ENCODE measurements at regions of chr3 and their contacts with region 1.

Region 1: GRCh38 chr3:39414421-39414907 is 7.9 kb downstream of the RPSA start:
- DNase-seq: no peak
- ATAC-seq: peak in 6 of 8 donors; percentile 36 to 83 (median 55)
- H3K4me3 ChIP-seq: no peak overlapping the region
- H3K27ac ChIP-seq: peak overlapping the region in 2 of 10 donors; percentile 22 to 33
- H3K4me1 ChIP-seq: peaks cover 0 to 28% (median 12%) of the 10 kb centered on the region in 9 donors
- H3K27me3 ChIP-seq: no peaks in the 10 kb centered on the region
- CTCF ChIP-seq: no peak

Region 2: GRCh38 chr3:39291903-39292329 is 122.5 kb before region 1 on chr3:
- intact Hi-C with region 1: no loop called
- DNase-seq: peak; percentile 62 to 69
- ATAC-seq: peak; percentile 48 to 69 (median 58)
- H3K4me3 ChIP-seq: no peak overlapping the region
- H3K27ac ChIP-seq: no peak overlapping the region
- H3K4me1 ChIP-seq: peaks cover 0 to 3% (median 0%) of the 10 kb centered on the region in 9 donors
- H3K27me3 ChIP-seq: no peaks in the 10 kb centered on the region
- CTCF ChIP-seq: peak; percentile 83 to 96 (median 94)

Region 3: DNA sequence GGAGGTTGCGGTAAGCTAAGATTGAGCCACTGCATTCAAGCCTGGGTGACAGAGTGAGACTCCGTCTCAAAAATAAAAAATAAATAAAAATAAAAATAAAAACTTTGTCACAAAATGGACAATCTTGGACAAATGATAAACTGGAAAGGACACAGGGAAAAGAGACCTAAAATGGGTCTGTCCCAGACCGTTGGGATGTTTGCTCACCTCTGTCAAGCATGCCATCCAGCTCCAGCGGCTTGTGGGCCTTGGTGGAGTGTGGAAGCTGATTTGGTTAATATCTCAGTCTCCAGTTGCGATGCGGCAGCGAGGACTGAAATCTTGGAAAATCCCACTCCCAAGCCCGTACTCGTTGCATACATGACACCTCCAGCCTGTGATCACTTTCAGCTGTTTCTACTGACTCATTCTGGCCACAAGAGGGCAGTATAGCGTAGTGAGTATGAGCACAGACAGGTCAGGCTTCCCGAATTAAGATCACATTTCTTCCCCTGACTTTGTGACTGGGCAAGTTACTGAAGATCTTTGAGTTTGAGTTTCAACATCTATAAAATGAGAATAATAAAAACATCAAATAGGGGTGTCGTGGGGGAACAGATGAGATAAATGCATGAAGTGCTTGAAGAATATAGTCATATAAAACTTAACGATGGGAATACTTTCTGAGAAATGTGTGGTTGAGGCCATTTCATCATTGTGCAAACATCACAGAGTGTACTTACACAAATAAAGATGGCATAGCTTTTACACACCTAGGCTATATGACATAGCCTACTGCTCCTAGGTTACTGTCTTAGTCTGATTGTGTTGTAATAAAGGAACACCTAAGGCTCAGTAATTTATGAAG is 33.4 kb after region 1 on chr3:
- intact Hi-C with region 1: loop called in 1 of 10 experiments (anchors 5 kb)
- DNase-seq: peak in 1 of 2 donors; percentile 75
- ATAC-seq: peak; percentile 67 to 92 (median 90)
- H3K4me3 ChIP-seq: no peak overlapping the region
- H3K27ac ChIP-seq: no peak overlapping the region
- H3K4me1 ChIP-seq: peaks cover 0 to 5% (median 0%) of the 10 kb centered on the region in 9 donors
- H3K27me3 ChIP-seq: peaks cover 0 to 4% (median 0%) of the 10 kb centered on the region in 7 donors
- CTCF ChIP-seq: peak; percentile 71 to 94 (median 88)

Region 4: GRCh38 chr3:39479701-39480414 is 65.4 kb after region 1 on chr3:
- intact Hi-C with region 1: no loop called
- DNase-seq: no peak
- ATAC-seq: no peak
- H3K4me3 ChIP-seq: no peak overlapping the region
- H3K27ac ChIP-seq: no peak overlapping the region
- H3K4me1 ChIP-seq: no peaks in the 10 kb centered on the region
- H3K27me3 ChIP-seq: no peaks in the 10 kb centered on the region
- CTCF ChIP-seq: no peak

Measured in heart right ventricle (tissue), 16 donors.